B cell (primary cell): ENCODE measurements at regions of chr14 and their contacts with region 1.

Region 1: DNA sequence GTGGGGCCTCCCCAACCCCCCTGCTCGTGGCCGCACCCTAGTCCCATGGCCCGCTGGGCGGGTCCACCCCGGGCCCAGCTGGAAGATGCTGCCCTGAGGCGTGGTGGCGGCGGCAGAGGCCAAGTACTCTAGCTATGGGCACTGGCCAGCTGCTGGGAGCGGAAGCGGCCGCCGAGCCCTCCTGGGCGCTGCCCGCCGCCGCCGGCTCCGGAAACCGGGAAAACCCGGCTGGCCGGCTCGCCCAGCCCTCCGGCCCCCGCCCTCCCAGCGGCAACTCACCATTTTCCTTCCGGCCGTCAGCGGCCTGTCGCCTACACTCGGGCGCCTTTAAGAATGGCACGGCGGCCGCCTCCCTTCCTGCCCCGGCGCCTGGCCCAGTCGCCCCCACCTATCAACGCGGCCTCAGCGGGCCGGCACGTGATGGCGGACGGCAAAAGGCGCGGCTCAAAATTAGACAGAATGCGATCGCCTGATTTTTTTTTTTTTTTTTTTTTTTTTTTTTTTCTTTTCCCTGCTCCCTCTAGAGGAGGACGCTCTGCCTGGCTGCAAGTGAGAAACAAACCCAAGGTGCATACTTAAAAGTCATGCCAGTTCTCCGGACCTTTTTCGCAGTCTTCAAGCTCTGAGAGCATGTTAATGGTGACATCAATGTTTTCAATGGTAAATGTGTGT is at the start of gene GMFB:
- DNase-seq: peak; percentile 92
- ATAC-seq: peak; percentile 96
- H3K4me3 ChIP-seq: peak within 1 kb of the TSS; percentile 69 to 97 (median 83)
- H3K4me3 Mint-ChIP-seq: peak within 1 kb of the TSS; percentile 97
- H3K27ac ChIP-seq: peak within 1 kb of the TSS; percentile 82 to 97
- H3K27ac Mint-ChIP-seq: peak within 1 kb of the TSS; percentile 98
- H3K4me1 ChIP-seq: peaks cover 41 to 52% of the 10 kb centered on the region in 2 donors
- H3K4me1 Mint-ChIP-seq: peaks cover 57% of the 10 kb centered on the region
- H3K27me3 ChIP-seq: no peaks in the 10 kb centered on the region
- H3K27me3 Mint-ChIP-seq: no peaks in the 10 kb centered on the region
- CTCF ChIP-seq: no peak
- total RNA-seq, gene GMFB: 42.6 and 49.8 TPM in 2 replicates

Region 2: GRCh38 chr14:54509546-54510501 is 21.0 kb after region 1 on chr14 and contains the start of gene CGRRF1:
- CTCF ChIA-PET with region 1: interaction called, 38 read pairs
- POLR2A ChIA-PET with region 1: interaction called, 6 read pairs
- intact Hi-C with region 1: loop called (anchors 1 kb)
- DNase-seq: peak; percentile 98
- ATAC-seq: peak; percentile 98
- H3K4me3 ChIP-seq: peak within 1 kb of the TSS; percentile 79 to 99 (median 96)
- H3K4me3 Mint-ChIP-seq: peak within 1 kb of the TSS; percentile 98
- H3K27ac ChIP-seq: peak within 1 kb of the TSS; percentile 81
- H3K27ac Mint-ChIP-seq: peak within 1 kb of the TSS; percentile 94
- H3K4me1 ChIP-seq: peaks cover 21 to 25% of the 10 kb centered on the region in 2 donors
- H3K4me1 Mint-ChIP-seq: peaks cover 44% of the 10 kb centered on the region
- H3K27me3 ChIP-seq: no peaks in the 10 kb centered on the region
- H3K27me3 Mint-ChIP-seq: no peaks in the 10 kb centered on the region
- CTCF ChIP-seq: peak; percentile 57
- total RNA-seq, gene CGRRF1: 15.8 and 17.9 TPM in 2 replicates

Region 3: DNA sequence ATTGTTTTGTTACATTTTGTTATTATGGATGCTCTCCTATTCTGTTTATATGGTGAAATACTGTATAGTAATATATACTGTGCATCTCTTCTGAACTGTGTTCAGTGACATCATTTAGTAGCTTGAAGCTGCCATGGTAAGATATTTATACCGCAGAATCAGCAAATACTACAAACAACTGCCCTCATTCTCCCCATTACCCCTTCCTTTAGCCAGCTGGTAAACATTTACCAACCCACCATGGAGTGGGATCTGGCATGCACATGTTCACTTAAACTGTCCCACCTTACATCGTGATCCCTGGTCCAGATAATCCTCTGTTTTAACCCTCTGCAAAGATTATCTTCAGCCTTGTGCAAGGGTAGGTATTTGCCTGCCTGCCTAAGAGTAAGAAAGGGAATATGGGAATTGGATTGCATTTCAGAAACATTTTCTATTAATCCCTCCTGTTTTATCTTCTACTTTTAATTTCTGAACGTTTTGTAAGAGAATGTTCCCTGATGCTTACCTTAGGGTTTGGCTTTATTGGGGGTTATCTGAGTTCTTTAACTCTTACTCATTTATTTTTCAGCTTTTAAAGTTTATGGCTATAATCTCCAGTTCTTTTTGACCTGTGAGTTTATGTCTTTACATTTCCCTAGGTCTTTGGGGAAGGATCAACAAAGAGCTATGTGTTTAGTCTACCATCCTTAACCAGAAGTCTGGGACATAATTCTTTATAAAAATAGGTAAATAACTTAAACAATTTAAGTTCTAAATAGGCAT is 828.9 kb after region 1 on chr14:
- CTCF ChIA-PET with region 1: no interaction called
- POLR2A ChIA-PET with region 1: interaction called, 10 read pairs
- intact Hi-C with region 1: no loop called
- DNase-seq: no peak
- ATAC-seq: no peak
- H3K4me3 ChIP-seq: no peak overlapping the region
- H3K4me3 Mint-ChIP-seq: no peak overlapping the region
- H3K27ac ChIP-seq: no peak overlapping the region
- H3K27ac Mint-ChIP-seq: no peak overlapping the region
- H3K4me1 ChIP-seq: no peaks in the 10 kb centered on the region
- H3K4me1 Mint-ChIP-seq: peaks cover 2% of the 10 kb centered on the region
- H3K27me3 ChIP-seq: no peaks in the 10 kb centered on the region
- H3K27me3 Mint-ChIP-seq: no peaks in the 10 kb centered on the region
- CTCF ChIP-seq: no peak